GM10248 (cell line): ENCODE measurements at regions of chr6 and their contacts with region 1.

Region 1: DNA sequence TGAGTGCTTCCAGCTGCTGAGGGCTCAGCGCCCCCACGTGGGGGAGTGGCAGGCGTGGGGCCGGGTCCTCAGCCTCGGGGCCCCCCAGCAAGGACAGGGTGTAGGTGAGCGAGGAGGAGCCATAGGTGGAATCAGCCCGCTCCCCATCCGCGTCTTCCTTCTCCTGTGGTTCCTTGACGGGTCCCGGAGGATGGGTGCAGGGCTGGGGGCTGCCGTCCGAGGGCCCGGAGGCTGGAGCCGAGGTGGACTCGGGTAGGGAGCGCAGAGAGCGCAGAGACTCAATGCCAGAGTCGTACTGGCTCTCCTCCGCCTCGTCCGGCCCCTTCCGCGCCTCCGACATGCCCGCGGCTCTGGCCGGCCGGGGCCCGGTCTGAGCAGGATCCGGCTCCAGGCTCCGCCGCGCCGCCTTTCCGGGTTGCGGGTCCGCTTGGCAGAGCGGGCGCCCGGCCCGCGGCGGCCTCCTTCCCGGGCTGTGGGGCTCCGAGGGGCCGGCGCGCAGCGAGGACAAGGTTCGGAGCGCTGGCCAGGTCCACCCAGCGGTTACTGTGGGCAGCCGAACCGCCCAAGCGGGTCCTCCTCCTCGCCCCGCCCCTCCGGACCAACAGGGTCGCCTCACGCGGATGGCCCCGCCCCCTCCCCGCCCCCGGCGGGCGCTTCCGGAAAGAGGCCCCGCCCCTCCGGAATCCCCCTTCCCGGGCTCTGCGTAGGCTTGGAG is at the start of gene NFKBIE:
- DNase-seq: peak; percentile 94
- CTCF ChIP-seq: peak; percentile 73

Region 2: GRCh38 chr6:44246663-44247337 is 18.4 kb before region 1 on chr6 and contains the start of gene HSP90AB1:
- CTCF ChIA-PET with region 1: interaction called, 16 read pairs
- POLR2A ChIA-PET with region 1: interaction called, 19 read pairs
- DNase-seq: peak; percentile 93
- CTCF ChIP-seq: no peak

Region 3: GRCh38 chr6:44275749-44276648 is 10.8 kb after region 1 on chr6:
- CTCF ChIA-PET with region 1: interaction called, 19 read pairs
- POLR2A ChIA-PET with region 1: no interaction called
- DNase-seq: no peak
- CTCF ChIP-seq: no peak

Region 4: DNA sequence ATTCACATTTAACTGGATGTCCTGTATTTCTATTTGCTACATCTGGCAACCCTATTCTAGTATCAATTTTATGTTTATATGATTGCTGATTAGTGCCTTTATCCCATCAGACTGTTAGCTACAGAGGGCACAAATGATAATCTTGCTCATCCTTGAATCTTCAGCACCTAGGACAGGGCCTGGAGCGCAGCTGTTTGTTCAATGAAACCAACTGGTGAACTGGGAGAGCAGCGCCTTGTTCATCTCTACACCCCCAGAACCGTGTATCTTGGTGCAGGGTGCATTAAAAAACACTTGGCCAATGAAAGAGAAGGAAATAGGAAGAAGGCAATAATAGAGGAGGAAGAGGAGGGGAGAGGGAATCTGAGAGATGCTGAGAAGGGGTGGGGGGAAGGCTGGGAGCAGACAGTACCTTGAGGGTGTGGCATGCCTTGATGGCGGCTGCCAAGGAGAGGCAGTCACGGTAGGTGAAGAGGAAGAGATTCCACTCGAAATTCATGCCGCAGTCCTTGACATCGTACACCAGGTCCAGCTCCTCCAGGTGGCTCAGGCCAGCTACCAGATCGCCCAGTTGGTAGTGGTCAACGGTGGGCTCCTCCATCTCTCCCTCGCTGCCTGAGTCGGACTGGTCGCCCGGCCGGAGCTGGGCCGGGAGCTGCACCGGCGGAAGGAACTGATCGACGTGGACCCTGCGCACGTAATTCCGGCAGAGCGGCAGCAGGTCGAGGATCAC is 20.6 kb after region 1 on chr6:
- CTCF ChIA-PET with region 1: interaction called, 39 read pairs
- POLR2A ChIA-PET with region 1: no interaction called
- DNase-seq: no peak
- CTCF ChIP-seq: no peak

Region 5: GRCh38 chr6:44291841-44292240 is 26.7 kb after region 1 on chr6:
- CTCF ChIA-PET with region 1: interaction called, 39 read pairs
- POLR2A ChIA-PET with region 1: no interaction called
- DNase-seq: no peak
- CTCF ChIP-seq: no peak

Region 6: GRCh38 chr6:44297063-44298038 is 32.2 kb after region 1 on chr6:
- CTCF ChIA-PET with region 1: interaction called, 182 read pairs
- POLR2A ChIA-PET with region 1: interaction called, 8 read pairs
- DNase-seq: peak; percentile 41
- CTCF ChIP-seq: no peak

Region 7: GRCh38 chr6:44312901-44313788 is 48.0 kb after region 1 on chr6 and contains the start of gene AARS2:
- CTCF ChIA-PET with region 1: interaction called, 182 read pairs
- POLR2A ChIA-PET with region 1: no interaction called
- DNase-seq: peak; percentile 91
- CTCF ChIP-seq: peak; percentile 95

Region 8: GRCh38 chr6:44373787-44374186 is 108.6 kb after region 1 on chr6:
- CTCF ChIA-PET with region 1: no interaction called
- POLR2A ChIA-PET with region 1: no interaction called
- DNase-seq: no peak
- CTCF ChIP-seq: no peak